ENCODE measurements at regions of chr6 and their contacts with region 1.

Region 1: DNA sequence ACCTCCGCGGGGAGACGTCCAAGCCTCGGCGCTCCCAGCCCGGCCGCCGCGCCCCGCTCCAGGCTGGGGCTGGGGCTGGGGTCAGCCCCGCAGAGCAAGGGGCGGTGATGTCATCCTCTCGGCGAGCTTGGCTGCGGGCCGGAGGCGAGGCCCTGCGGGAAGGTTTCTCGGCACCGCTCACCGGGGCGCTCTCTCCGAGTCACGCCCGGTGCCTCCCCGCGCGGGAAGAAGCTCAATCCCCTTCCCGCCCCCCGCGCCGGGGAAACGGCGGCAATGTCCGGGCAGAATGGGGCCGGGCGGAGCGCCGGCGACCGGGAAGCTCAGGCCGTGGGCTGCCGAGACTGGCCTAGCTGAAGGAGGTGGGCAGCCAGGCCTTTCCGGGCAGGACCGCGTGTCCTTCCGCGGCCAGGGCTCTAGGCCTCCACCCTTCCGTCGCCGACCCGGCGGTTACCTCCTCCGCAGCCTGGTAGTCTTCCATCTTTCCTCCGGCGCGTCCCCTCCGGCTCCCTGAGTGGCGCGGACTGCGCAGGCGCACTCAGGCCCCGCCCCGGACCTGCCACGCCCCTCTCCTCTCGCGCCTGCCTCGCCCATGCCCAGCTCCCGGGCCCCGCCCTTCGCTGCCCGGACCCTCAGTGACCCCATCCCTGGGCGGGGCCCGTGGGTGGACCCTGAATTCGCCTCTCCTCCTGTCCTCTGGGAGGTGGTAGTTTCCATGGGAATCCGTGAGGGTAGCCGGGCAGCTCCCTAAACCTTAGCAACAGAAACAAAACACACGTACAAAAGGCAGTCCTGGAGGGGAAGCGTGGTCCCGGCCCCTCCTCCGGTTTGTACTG is at the start of gene DYNLT1:
- DNase-seq: peak; percentile 88 to 93
- ATAC-seq: peak; percentile 63 to 67
- H3K4me3 ChIP-seq: peak within 1 kb of the TSS; percentile 87 to 99 (median 96)
- H3K27ac ChIP-seq: peak within 1 kb of the TSS; percentile 97 to 100 (median 98)
- H3K4me1 ChIP-seq: peaks cover 47 to 51% of the 10 kb centered on the region in 2 donors
- H3K27me3 ChIP-seq: no peaks in the 10 kb centered on the region
- CTCF ChIP-seq: no peak
- POLR2A ChIP-seq: peak; percentile 100
- total RNA-seq, gene DYNLT1: 62.8 to 94.7 (median 67.3) TPM

Region 2: DNA sequence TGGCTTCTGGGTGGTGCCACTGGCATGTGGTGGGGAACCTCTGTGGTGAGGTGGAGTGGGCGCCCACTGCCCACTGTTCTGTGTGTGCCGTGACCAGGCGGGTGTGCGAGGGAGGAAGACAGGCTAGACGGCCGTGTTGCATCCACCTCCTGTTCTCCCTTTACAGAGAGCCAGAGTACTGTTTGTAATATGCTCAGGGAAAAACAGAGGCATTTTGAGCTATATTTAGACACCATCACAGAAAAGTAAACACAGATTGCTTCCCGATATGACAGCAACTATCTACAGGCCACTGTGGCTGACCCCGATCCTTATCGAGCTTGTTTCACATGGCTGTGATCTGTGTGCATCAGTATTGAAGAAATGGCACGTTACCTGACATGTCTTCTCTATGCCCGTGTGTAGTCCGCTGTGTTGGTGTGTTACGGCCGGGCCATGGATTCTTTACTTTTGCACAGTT is 1821.7 kb before region 1 on chr6:
- in situ Hi-C with region 1: no loop called
- intact Hi-C with region 1: loop called (anchors 5 kb)
- DNase-seq: peak; percentile 39 to 52
- ATAC-seq: peak; percentile 65 to 83
- H3K4me3 ChIP-seq: peak overlapping the region; percentile 20 to 50 (median 36)
- H3K27ac ChIP-seq: peak overlapping the region; percentile 89 to 95 (median 91)
- H3K4me1 ChIP-seq: peaks cover 79 to 81% of the 10 kb centered on the region in 2 donors
- H3K27me3 ChIP-seq: no peaks in the 10 kb centered on the region
- CTCF ChIP-seq: no peak
- POLR2A ChIP-seq: peak; percentile 12 to 66

Measured in gastrocnemius medialis (tissue), 4 donors.